K562 (cell line): ENCODE measurements at regions of chr1 and their contacts with region 1.

Region 1: DNA sequence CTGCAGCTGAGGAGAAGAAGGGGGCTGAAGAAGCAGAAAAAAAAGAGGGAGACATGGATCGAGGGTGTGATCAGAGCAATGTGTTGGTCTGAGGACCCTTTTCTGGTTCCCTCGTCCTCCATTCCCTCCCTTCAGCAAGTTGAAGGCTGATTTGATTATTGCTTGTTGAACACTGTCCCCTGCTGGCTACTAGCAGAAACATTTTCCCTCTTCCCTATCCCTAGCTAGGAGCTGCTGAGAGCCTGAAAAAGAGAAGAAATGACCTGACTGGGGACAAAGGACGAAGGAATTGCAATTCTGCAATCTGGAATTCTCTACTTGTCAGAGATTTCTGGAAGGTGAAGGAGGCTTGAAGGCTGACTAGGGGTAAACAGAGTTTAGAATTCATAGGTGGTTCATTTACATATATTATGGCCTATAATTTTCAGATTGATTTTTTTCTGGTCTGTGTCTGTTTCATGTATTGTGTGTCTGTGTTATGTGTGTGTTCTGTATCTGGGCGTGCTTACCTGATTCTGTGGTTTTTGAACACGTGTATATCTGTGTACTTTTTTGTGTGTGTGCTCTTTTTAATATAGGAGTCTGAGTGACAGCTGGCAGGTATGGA is 9.8 kb downstream of the NHLH1 start:
- DNase-seq: peak; percentile 72 to 82 (median 74)
- ATAC-seq: peak; percentile 85
- H3K4me3 ChIP-seq: no peak overlapping the region
- H3K27ac ChIP-seq: no peak overlapping the region
- H3K4me1 ChIP-seq: peaks cover 17 to 22% of the 10 kb centered on the region in 2 experiments
- H3K27me3 ChIP-seq: no peaks in the 10 kb centered on the region; a peak in 1 of 5 replicates
- CTCF ChIP-seq: peak; percentile 89 to 98 (median 94)
- EP300 ChIP-seq: no peak
- POLR2A ChIP-seq: no peak
- RAD21 ChIP-seq: peak; percentile 97 to 99

Region 2: DNA sequence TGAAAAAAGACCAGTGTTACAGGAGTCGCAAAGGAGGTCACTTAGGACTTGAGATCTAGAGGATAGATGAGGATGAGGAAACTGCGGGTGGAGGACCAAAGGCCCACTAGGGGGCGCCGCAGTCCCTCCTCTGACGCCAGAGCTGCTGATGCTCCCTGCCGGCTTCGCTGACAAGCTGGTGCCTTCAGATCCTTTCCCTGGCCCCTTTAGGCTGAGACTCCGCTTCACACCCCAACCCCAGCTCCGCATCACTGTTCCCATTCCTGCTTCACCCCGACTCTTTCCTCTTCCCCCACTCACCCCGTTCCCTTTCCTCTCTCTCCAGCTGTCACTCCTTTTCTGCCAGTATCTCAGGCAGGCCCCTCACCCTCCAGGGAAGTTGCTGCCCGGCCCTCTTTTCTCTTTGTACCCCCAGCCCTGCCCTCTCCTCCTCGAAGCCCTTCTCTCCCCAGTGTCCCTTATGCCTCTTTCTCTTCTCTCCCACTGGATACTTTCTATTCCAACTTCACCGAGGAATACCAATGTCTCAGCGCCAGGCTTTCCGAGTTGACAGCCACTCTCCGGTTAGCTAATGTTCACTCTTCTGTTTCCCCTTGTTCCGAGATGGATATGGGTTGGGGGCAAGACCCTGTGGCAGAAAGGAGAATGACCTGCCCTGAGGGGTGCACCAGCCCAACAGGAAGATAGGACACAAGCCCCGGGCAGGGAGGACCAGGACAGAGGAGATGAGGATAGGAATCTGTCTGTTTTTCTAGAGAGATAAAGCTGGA is 290.8 kb before region 1 on chr1:
- CTCF ChIA-PET with region 1: interaction called, 10 read pairs
- POLR2A ChIA-PET with region 1: no interaction called
- in situ Hi-C with region 1: no loop called
- intact Hi-C with region 1: loop called (anchors 1 kb)
- DNase-seq: peak; percentile 86 to 90 (median 88)
- ATAC-seq: peak; percentile 97
- H3K4me3 ChIP-seq: no peak overlapping the region
- H3K27ac ChIP-seq: no peak overlapping the region
- H3K4me1 ChIP-seq: peaks cover 0 to 16% of the 10 kb centered on the region in 2 experiments; a peak in 1 of 5 replicates
- H3K27me3 ChIP-seq: peaks cover 4 to 18% of the 10 kb centered on the region in 2 experiments; a peak in 3 of 5 replicates
- CTCF ChIP-seq: peak; percentile 95 to 97 (median 96)
- EP300 ChIP-seq: no peak
- POLR2A ChIP-seq: no peak
- RAD21 ChIP-seq: peak; percentile 71 to 84

Region 3: DNA sequence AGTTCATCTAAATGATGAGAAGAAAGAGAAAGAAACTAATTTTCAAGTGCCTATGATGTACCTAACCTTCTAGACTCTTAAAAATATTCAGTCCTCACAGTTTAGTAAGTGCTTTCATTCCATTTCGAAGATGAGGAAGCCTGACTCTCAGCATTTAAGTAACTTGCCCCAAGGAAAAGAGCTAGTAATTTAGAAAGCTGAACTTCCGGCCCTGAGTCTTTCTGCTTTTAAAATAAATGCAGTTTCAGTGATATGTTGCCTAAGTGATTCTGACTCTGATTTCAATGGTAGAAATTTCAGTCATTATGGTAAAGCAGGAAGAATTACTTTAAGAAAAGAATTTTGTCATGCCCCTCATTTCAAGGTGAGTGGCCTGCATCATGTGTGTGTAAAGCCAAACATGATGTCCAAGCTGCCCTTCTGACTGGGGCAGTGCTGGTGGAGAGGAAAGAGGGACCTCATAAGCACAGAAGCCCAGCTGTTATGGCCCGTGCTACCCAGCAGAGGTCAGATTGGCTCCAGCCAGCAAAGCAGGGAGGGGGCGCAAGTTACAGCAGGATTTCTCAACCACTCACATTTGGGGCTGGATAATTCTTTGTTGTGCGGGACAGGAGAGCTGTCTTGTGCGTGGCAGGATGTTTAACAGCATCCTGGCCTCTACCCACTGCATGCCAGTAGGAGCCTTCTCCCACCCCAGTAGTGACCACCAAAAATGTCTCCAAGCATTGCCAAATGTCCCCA is 214.5 kb before region 1 on chr1:
- CTCF ChIA-PET with region 1: interaction called, 4 read pairs
- POLR2A ChIA-PET with region 1: no interaction called
- in situ Hi-C with region 1: no loop called
- intact Hi-C with region 1: loop called (anchors 2 kb)
- DNase-seq: peak in 3 of 4 experiments; percentile 24 to 45 (median 33)
- ATAC-seq: peak; percentile 92
- H3K4me3 ChIP-seq: no peak overlapping the region
- H3K27ac ChIP-seq: no peak overlapping the region
- H3K4me1 ChIP-seq: peaks cover 0 to 9% of the 10 kb centered on the region in 2 experiments; a peak in 3 of 5 replicates
- H3K27me3 ChIP-seq: peaks cover 9 to 34% of the 10 kb centered on the region in 2 experiments; a peak in 4 of 5 replicates
- CTCF ChIP-seq: peak; percentile 55 to 89 (median 68)
- EP300 ChIP-seq: no peak
- POLR2A ChIP-seq: no peak
- RAD21 ChIP-seq: peak; percentile 14 to 62; a peak in 2 of 4 replicates

Region 4: DNA sequence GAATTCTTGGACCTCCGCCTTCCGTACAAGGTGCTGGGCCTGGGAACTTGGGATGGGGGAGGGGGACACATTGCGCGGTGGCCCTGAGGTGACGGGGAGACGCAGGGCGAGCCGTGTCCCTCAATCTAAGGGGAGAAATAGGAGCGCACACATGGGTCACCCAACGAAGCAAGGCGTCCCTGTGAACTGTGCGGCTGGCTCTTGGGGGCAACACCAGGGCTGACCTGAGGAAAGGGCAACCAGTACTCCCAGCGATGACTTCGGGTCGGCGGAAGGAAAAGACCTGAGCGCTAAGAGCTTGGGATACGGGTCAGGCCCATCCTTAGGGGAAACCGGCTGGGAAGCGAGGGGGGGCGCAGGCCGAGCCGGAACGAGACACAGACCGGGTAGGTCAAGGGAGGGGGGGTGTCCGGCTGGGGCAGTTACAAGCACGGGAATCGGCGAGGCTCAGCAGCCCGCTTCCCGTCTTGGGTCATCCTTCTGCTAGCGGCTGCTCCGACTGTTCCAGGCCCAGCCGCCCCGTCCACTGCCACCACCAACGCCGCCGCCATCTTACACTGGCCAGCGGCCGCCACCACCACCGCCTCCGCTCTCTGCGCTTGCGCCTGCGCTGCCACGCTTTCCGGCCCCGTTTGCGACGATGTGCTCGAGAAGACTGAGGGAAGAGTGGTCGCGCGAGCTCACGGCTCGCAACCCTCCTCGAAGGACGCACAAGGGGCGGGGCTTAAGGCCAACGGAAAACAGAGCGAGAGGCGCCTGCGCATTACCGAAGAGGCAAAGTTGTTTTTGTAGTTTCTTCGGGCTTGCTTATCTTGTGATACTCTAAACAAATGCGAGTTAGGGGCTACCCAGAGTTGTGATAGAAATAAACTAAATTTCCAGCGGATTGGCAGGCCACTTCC is 114.5 kb before region 1 on chr1 and contains the start of gene DCAF8:
- CTCF ChIA-PET with region 1: no interaction called
- POLR2A ChIA-PET with region 1: interaction called, 3 read pairs
- in situ Hi-C with region 1: no loop called
- intact Hi-C with region 1: loop called (anchors 5 kb)
- DNase-seq: peak; percentile 93 to 99 (median 95)
- ATAC-seq: peak; percentile 94
- H3K4me3 ChIP-seq: peak within 1 kb of the TSS; percentile 77
- H3K27ac ChIP-seq: peak within 1 kb of the TSS; percentile 98
- H3K4me1 ChIP-seq: peaks cover 6 to 20% of the 10 kb centered on the region in 2 experiments; a peak in 4 of 5 replicates
- H3K27me3 ChIP-seq: no peaks in the 10 kb centered on the region
- CTCF ChIP-seq: no peak
- EP300 ChIP-seq: peak; percentile 6; the same call in 1 of the 2 replicates
- POLR2A ChIP-seq: peak; percentile 99
- RAD21 ChIP-seq: no peak
- polyA plus RNA-seq, gene DCAF8: 11.6 to 19.5 TPM

Region 5: DNA sequence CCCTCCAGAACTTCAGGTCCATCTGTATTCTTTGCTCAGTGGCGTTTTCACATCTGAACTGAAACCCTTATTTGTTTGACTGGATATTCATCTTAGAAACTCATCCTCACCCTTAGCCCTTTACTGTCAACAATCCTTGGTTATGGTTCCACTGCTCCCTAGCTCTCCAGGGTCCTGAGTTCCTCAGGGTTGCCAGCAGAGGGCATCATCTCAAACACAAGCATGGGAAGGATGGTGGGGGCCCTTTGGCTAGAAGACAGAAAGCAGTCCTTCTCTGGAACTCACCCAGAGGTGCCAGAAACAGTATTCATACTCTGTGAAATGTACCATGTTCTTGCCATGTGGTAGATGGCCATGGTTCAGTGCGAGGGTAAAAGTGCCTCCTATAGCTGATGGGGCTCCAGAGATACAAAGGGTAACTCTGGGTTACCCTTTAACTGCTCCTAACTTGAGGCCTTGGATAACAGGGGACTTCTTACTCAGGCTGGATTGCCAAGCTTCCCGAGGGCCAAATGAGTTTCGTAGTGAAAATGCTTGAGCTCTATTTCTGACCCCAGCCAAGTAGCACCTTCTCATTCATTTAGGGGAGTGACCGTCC is 22.1 kb before region 1 on chr1:
- CTCF ChIA-PET with region 1: interaction called, 12 read pairs
- POLR2A ChIA-PET with region 1: interaction called, 37 read pairs
- in situ Hi-C with region 1: no loop called
- intact Hi-C with region 1: loop called (anchors 1 kb)
- DNase-seq: peak; percentile 58 to 66 (median 60)
- ATAC-seq: peak; percentile 94
- H3K4me3 ChIP-seq: no peak overlapping the region
- H3K27ac ChIP-seq: no peak overlapping the region
- H3K4me1 ChIP-seq: no peaks in the 10 kb centered on the region
- H3K27me3 ChIP-seq: no peaks in the 10 kb centered on the region
- CTCF ChIP-seq: peak; percentile 66 to 71 (median 69)
- EP300 ChIP-seq: no peak
- POLR2A ChIP-seq: no peak
- RAD21 ChIP-seq: peak; percentile 53 to 78; a peak in 3 of 4 replicates

Region 6: DNA sequence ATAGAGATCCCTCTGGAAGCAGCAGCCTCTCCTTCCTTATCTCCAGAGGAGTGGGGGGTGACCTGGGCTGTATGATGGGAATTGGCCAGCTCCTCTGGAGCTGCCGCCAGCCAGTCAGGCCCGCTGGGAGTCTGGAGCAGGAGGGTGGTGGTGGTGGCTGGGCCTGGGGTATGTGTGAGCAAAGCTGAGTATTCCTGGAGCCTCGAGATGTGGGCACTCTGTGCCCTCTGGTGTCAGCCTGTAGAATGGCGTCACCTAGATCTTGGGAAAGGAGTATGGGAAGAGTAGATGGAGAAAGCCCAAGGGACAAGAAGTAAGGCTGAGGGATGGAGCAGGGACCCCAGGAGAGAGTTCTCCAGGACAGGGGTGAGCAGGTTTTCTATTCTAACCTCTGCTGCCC is 39.7 kb after region 1 on chr1:
- CTCF ChIA-PET with region 1: no interaction called
- POLR2A ChIA-PET with region 1: interaction called, 4 read pairs
- in situ Hi-C with region 1: no loop called
- intact Hi-C with region 1: loop called (anchors 1 kb)
- DNase-seq: peak in 1 of 4 experiments; percentile 40
- ATAC-seq: peak; percentile 51
- H3K4me3 ChIP-seq: no peak overlapping the region
- H3K27ac ChIP-seq: no peak overlapping the region
- H3K4me1 ChIP-seq: peaks cover 29 to 32% of the 10 kb centered on the region in 2 experiments
- H3K27me3 ChIP-seq: no peaks in the 10 kb centered on the region
- CTCF ChIP-seq: peak; percentile 48 to 58 (median 51); a peak in 5 of 6 replicates
- EP300 ChIP-seq: no peak
- POLR2A ChIP-seq: no peak
- RAD21 ChIP-seq: peak; percentile 10 to 64; a peak in 2 of 4 replicates

Region 7: DNA sequence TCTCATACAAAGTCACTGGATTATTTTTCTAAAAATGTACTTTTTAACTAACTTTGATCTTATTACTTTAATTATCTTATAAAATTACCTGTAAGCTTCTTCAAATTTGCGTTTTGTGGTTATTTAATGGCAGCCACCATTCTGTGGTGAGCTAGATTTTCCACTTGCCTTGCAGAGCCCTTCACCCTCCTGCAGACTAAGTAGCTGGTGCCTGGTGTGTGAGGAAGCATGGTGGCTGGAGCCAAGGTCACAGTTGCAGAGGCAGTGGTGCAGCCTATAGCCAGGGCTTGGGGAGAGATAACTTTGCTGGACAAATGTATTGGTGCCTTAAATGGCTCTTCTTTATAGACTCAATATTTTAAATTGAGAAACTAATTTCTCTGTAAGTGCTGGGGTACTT is 213.9 kb after region 1 on chr1:
- CTCF ChIA-PET with region 1: no interaction called
- POLR2A ChIA-PET with region 1: no interaction called
- in situ Hi-C with region 1: no loop called
- intact Hi-C with region 1: no loop called
- DNase-seq: no peak
- ATAC-seq: no peak
- H3K4me3 ChIP-seq: no peak overlapping the region
- H3K27ac ChIP-seq: no peak overlapping the region
- H3K4me1 ChIP-seq: no peaks in the 10 kb centered on the region
- H3K27me3 ChIP-seq: no peaks in the 10 kb centered on the region
- CTCF ChIP-seq: no peak
- EP300 ChIP-seq: no peak
- POLR2A ChIP-seq: no peak
- RAD21 ChIP-seq: no peak